AG04450 (cell line): ENCODE measurements at regions of chr6 and their contacts with region 1.

Region 1: DNA sequence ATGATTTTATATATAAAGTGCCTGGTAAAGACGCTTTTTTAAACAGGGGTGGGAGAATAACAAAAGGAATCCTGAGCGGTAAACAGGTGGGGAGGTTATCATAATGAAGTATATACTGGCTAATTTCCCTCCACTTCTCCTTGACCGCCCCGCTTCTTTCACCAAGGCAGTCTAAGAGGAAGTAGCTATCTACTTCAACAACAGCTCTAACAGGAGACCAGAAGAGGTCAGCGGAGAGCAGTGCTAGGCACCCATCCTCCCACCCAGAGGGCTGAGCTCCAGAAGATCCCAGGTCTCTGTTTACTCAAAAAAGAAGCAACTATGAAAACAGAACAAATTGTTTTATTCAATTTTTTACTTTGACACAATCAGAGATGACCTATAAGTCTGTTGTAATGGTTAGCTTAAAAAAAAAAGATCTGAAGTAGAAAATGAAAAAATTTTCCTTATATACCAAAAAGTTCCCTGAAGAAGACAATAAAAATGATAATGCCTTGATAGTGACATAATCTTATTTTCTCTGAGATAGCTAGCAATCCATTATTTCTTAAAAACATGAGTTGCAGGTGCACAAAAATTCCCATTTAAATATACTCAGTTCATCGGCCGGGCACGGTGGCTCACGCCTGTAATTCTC is 141.1 kb downstream of the PDSS2 start:
- DNase-seq: peak; percentile 32
- H3K4me3 ChIP-seq: no peak overlapping the region
- H3K27ac ChIP-seq: no peak overlapping the region
- H3K27me3 ChIP-seq: no peaks in the 10 kb centered on the region
- CTCF ChIP-seq: peak; percentile 91

Region 2: DNA sequence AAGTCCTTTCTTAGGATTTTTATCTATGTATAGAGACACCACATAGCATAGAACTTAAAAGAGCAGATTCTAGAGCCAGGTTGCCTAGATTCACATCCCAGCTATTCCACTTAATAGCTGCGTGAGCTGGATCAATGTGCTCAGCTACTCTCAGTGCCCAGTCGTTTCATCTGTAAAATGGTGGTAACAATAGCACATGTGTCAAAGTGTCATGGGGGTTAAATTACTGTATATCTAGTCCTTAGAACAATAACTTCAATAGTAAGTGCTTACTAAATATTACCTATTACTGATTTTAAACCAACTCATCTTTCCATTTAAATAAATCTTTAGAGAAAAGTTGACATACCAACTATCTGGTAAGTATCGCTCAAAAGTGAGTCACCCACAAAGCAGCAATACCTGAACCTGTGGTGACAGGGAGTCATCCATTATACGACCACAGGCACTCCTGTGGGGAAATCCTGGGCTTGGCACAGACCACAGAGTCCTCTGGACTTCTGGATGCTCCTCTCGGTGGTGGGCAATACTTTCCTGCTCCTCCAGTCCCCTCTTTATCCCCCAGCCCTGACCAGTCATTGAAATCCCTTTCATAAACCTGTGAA is 13.7 kb before region 1 on chr6:
- CTCF ChIA-PET with region 1: interaction called, 13 read pairs
- POLR2A ChIA-PET with region 1: no interaction called
- DNase-seq: no peak
- H3K4me3 ChIP-seq: no peak overlapping the region
- H3K27ac ChIP-seq: no peak overlapping the region
- H3K27me3 ChIP-seq: no peaks in the 10 kb centered on the region
- CTCF ChIP-seq: no peak

Region 3: GRCh38 chr6:107330168-107330567 is 11.9 kb after region 1 on chr6:
- CTCF ChIA-PET with region 1: interaction called, 24 read pairs
- POLR2A ChIA-PET with region 1: no interaction called
- DNase-seq: no peak
- H3K4me3 ChIP-seq: no peak overlapping the region
- H3K27ac ChIP-seq: no peak overlapping the region
- H3K27me3 ChIP-seq: no peaks in the 10 kb centered on the region
- CTCF ChIP-seq: no peak

Region 4: DNA sequence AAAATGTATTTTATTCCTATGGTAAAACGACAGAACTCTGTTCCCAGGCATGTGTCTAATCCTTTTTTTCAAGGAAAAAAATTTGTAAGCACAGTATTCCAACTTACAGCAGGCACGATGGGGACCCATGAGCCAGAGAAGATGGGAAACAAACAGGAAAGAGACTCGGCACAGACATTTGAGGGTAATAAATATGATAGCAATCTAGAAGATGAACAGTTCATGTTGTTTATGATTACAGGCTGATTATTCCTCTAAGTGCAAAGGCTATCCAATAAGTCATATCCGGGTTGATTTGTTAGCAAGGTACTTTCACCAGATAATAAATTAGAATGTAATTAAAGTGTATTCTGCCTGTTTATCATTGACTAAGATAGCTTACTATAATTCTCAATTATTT is 97.9 kb after region 1 on chr6:
- CTCF ChIA-PET with region 1: interaction called, 12 read pairs
- POLR2A ChIA-PET with region 1: no interaction called
- DNase-seq: no peak
- H3K4me3 ChIP-seq: no peak overlapping the region
- H3K27ac ChIP-seq: no peak overlapping the region
- H3K27me3 ChIP-seq: no peaks in the 10 kb centered on the region
- CTCF ChIP-seq: no peak

Region 5: DNA sequence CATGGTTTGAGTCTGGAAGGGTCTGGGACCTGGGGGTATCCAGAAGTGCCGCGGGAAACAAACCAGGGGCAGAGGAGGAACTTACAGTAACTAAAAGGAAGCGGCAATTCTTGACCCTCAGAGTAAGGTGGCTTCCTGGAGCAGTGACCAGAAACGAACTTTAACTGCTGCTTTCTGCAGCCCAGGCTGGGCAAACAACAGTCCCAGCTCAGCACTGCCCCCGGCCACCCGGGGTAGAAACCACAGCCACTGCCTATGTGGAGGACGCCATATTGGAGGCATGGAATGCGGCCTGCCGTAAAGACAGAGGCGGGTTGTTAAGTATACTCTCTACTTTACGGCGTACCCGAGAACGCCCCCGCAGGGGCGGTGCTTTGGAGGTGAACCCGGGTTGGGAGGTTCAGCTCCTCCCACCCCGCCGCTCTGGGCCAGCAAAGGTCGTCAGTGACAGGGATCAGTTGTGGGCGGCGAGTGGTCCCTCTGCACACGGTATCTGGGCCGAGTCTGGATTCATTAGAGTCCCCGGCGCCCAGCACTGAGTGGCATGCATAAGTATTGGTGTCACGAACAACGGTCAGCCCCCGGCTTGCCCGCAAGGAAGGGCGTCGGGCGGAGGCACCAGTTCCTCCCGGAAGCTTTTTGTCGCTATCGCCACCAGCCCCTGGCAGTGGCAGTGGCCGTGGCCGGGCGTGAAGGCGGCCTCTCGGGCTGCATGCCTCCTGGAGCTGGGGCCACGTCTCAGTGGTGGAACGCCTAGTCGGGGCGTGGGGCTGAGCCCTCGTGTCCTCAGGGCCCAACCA is 141.3 kb after region 1 on chr6 and contains the start of gene PDSS2:
- CTCF ChIA-PET with region 1: interaction called, 27 read pairs
- POLR2A ChIA-PET with region 1: interaction called, 4 read pairs
- DNase-seq: peak; percentile 87
- H3K4me3 ChIP-seq: peak within 1 kb of the TSS; percentile 93
- H3K27ac ChIP-seq: peak within 1 kb of the TSS; percentile 80
- H3K27me3 ChIP-seq: no peaks in the 10 kb centered on the region
- CTCF ChIP-seq: peak; percentile 67
- polyA plus RNA-seq, gene PDSS2: 17.0 and 19.1 TPM in 2 replicates

Region 6: DNA sequence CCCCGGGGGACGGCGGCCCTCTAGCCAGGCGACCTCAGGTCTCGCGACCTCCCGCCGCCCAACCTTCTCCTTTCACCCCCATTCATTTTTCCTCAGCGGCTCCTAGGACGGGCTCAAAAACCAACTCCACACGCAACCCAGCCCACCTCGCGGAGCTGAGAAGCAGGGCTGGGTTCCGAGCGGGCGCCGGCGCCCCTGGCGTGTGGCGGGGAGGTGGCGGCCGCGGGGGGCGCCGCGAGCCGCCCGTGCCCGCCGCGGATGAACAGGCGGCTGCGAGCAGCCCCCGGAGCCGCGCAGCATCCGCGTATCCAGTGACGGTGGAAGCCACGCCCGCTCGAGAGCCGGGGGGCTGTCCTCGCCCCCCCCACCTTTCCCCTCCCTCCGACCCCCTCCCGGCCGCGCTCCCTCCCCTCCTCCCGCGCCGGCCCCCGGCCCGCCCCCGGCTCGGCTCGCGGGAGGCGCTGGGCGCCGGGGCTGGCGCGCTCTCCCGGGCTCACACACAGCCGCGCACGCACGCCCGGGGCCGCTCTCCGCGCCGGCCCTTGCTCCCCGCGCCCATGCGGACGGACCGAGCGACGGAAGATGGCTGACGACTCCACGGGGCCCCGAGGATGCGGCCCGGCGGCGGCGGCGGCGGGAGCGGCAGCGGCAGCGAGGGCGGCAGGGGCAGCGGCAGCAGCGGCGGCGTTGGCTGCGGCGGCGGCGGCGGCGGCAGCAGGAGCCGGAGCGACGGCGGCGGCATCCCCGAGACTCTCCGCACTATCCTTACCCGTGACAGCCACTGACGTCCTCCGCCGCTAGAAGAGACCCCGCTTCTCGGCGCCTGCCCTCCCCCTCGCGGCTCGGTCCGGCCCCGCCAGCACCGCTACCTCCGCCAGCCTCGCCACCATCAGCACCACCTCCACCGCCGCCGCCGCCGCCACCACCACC is 171.7 kb after region 1 on chr6 and contains the start of gene SOBP:
- CTCF ChIA-PET with region 1: interaction called, 14 read pairs
- POLR2A ChIA-PET with region 1: no interaction called
- DNase-seq: no peak
- H3K4me3 ChIP-seq: peak within 1 kb of the TSS; percentile 76
- H3K27ac ChIP-seq: no peak within 1 kb of the TSS
- H3K27me3 ChIP-seq: peaks cover 19% of the 10 kb centered on the region
- CTCF ChIP-seq: no peak
- polyA plus RNA-seq, gene SOBP: 0.76 and 1.1 TPM in 2 replicates

Region 7: GRCh38 chr6:108760126-108761050 is 1442.2 kb after region 1 on chr6:
- CTCF ChIA-PET with region 1: no interaction called
- POLR2A ChIA-PET with region 1: no interaction called
- DNase-seq: no peak
- H3K4me3 ChIP-seq: no peak overlapping the region
- H3K27ac ChIP-seq: no peak overlapping the region
- H3K27me3 ChIP-seq: no peaks in the 10 kb centered on the region
- CTCF ChIP-seq: no peak